ENCODE measurements at regions of chr21 and their contacts with region 1.

Region 1: GRCh38 chr21:28737674-28738419 is 254.8 kb downstream of the LTN1 start:
- ATAC-seq: peak in 4 of 8 experiments; percentile 20 to 65 (median 36)
- H3K4me3 ChIP-seq: no peak overlapping the region
- H3K27ac ChIP-seq: no peak overlapping the region
- H3K4me1 ChIP-seq: peaks cover 2 to 9% of the 10 kb centered on the region in 2 donors

Region 2: DNA sequence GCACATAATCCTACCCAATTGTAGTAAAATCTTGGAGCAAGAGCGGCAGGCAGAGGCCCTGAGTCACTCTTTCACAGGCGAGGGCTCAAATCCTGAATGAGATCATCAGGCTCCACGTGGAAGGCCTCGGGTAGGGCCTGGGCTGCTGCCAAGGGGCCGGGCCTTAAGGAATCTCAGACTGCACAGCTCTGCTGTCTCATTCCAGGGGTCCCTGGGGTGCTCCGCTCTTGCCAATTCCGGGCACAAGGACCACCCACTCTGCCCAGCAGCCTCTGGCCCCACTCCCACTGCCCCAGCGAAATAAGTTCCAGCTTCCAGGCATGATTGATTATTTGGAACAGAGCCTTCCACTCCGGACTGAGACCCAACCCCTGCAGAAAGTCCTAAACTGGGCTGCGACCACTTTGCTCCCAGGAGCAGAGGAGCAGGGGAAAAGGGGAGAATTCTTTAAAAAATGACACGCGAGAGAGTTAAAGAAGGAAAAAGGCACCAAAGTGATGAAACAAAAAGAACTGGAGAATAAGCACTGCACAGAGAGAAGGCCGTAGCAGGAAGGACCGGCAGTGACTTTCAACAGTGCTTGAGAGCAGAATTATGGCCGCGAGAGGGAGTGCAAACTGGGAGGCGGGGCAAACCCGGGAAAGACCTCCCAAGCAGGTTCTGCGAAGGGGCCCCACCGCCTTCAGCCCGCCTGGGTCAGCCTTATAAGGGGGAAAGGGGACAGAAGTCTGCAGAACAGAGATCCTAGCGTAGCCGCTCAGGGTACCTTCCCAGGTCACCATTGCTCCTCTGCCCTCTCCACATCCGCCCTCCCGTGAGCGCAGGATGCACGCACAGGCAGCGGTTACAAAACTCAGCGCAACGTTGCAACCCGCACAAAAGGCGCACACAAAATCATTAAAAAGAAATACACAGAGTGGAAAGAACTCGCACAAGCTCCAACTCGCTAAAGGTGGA is 1894.6 kb before region 1 on chr21:
- in situ Hi-C with region 1: loop called in 3 of 9 experiments (anchors 10 to 25 kb)
- ATAC-seq: peak; percentile 38 to 64 (median 54)
- H3K4me3 ChIP-seq: peak overlapping the region; percentile 47 to 89 (median 75)
- H3K27ac ChIP-seq: peak overlapping the region; percentile 90
- H3K4me1 ChIP-seq: peaks cover 8% of the 10 kb centered on the region in 2 donors

Measured in motor neuron (in vitro differentiated cells).